Caco-2 (cell line): ENCODE measurements at regions of chr17 and their contacts with region 1.

Region 1: GRCh38 chr17:64420143-64420971 is 28.6 kb upstream of the MILR1 start:
- DNase-seq: peak in 1 of 2 experiments; percentile 66
- H3K4me3 ChIP-seq: no peak overlapping the region
- H3K4me3 Mint-ChIP-seq: no peak overlapping the region
- H3K27ac Mint-ChIP-seq: no peak overlapping the region
- H3K4me1 ChIP-seq: peaks cover 5% of the 10 kb centered on the region; the same call in 1 of the 2 replicates
- H3K4me1 Mint-ChIP-seq: no peaks in the 10 kb centered on the region
- H3K27me3 ChIP-seq: no peaks in the 10 kb centered on the region
- H3K27me3 Mint-ChIP-seq: no peaks in the 10 kb centered on the region
- CTCF ChIP-seq: peak; percentile 66 to 72

Region 2: GRCh38 chr17:64320613-64321553 is 99.5 kb before region 1 on chr17:
- CTCF ChIA-PET with region 1: interaction called, 9 read pairs
- POLR2A ChIA-PET with region 1: no interaction called
- intact Hi-C with region 1: loop called (anchors 1 kb)
- DNase-seq: peak; percentile 65
- H3K4me3 ChIP-seq: no peak overlapping the region
- H3K4me3 Mint-ChIP-seq: no peak overlapping the region
- H3K27ac Mint-ChIP-seq: peak overlapping the region; percentile 87
- H3K4me1 ChIP-seq: peaks cover 58% of the 10 kb centered on the region
- H3K4me1 Mint-ChIP-seq: peaks cover 50% of the 10 kb centered on the region
- H3K27me3 ChIP-seq: no peaks in the 10 kb centered on the region
- H3K27me3 Mint-ChIP-seq: no peaks in the 10 kb centered on the region
- CTCF ChIP-seq: peak; percentile 44 to 80

Region 3: DNA sequence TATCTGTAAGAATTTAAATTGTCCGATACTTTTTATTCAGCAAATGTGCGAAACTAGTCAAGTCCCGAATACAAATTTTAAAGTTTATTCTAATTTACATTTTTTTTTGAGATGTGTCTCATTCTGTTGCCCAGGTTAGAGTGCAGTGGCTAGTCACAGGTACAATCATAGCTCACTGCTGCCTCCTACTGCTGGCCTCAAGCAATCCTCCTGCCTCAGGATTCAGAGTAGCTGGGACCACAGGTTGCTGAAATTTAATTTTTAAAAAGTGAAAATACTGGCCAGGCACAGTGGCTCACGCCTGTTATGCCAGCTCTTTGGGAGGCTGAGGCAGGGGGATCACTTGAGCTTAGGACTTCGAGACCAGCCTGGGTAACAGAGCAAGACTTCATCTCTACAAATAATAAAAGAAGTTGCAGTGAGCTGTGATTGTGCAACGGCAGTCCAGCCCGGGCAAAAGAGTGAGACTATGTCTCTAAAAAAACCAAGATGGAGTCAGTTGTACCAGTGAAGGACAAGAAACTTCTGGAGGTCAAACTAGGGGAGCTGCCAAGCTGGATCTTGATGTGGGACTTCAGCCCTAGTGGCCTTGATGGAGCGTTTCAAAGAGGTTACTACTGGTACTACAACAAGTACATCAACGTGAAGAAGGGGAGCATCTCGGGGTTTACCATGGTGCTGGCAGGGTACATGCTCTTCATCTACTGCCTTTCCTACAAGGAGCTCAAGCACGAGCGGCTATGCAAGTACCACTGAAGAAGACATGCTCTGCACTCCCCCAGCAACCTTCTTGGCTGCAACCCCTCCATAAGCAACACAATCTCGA is 70.9 kb after region 1 on chr17:
- CTCF ChIA-PET with region 1: interaction called, 29 read pairs
- POLR2A ChIA-PET with region 1: interaction called, 4 read pairs
- intact Hi-C with region 1: loop called (anchors 1 kb)
- DNase-seq: peak in 1 of 2 experiments; percentile 51
- H3K4me3 ChIP-seq: no peak overlapping the region
- H3K4me3 Mint-ChIP-seq: no peak overlapping the region
- H3K27ac Mint-ChIP-seq: no peak overlapping the region
- H3K4me1 ChIP-seq: no peaks in the 10 kb centered on the region
- H3K4me1 Mint-ChIP-seq: peaks cover 11% of the 10 kb centered on the region
- H3K27me3 ChIP-seq: no peaks in the 10 kb centered on the region
- H3K27me3 Mint-ChIP-seq: no peaks in the 10 kb centered on the region
- CTCF ChIP-seq: peak; percentile 41 to 59

Region 4: DNA sequence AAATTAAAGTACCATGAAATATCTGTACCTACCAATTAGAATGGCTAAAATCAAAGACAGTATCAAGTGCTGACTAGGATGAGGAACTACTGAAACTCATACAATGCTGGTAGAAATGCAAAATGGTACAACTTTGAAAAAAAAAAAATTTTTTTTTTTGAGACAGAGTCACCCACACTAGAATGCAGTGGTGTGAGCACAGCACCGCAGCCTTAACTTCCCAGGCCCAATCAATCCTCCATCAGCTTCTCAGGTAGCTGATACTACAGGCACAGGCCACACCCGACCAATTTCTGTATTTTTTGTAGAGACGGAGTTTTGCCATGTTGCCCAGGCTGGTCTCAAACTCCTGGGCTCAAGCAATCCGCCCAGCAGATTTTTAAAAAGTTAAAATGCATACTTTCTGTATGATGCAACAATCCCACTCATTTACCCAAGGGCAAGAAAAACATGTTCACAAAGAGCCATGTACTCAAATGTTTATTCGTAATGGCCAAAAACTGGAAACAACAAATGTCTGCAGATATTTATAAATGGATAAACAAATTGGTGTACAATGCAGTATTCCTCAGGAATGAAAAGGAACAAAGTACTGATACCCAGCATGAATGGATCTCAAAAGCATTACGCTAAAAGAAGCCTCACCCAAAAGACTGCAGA is 233.1 kb after region 1 on chr17:
- CTCF ChIA-PET with region 1: interaction called, 6 read pairs
- POLR2A ChIA-PET with region 1: no interaction called
- intact Hi-C with region 1: loop called (anchors 1 kb)
- DNase-seq: no peak
- H3K4me3 ChIP-seq: no peak overlapping the region
- H3K4me3 Mint-ChIP-seq: no peak overlapping the region
- H3K27ac Mint-ChIP-seq: peak overlapping the region; percentile 2
- H3K4me1 ChIP-seq: no peaks in the 10 kb centered on the region
- H3K4me1 Mint-ChIP-seq: no peaks in the 10 kb centered on the region
- H3K27me3 ChIP-seq: no peaks in the 10 kb centered on the region
- H3K27me3 Mint-ChIP-seq: no peaks in the 10 kb centered on the region
- CTCF ChIP-seq: no peak

Region 5: GRCh38 chr17:64682261-64683181 is 262.2 kb after region 1 on chr17:
- CTCF ChIA-PET with region 1: no interaction called
- POLR2A ChIA-PET with region 1: no interaction called
- intact Hi-C with region 1: no loop called
- DNase-seq: no peak
- H3K4me3 ChIP-seq: no peak overlapping the region
- H3K4me3 Mint-ChIP-seq: no peak overlapping the region
- H3K27ac Mint-ChIP-seq: no peak overlapping the region
- H3K4me1 ChIP-seq: no peaks in the 10 kb centered on the region
- H3K4me1 Mint-ChIP-seq: no peaks in the 10 kb centered on the region
- H3K27me3 ChIP-seq: no peaks in the 10 kb centered on the region
- H3K27me3 Mint-ChIP-seq: peaks cover 3% of the 10 kb centered on the region
- CTCF ChIP-seq: no peak